ENCODE measurements at regions of chr1 and their contacts with region 1.

Region 1: DNA sequence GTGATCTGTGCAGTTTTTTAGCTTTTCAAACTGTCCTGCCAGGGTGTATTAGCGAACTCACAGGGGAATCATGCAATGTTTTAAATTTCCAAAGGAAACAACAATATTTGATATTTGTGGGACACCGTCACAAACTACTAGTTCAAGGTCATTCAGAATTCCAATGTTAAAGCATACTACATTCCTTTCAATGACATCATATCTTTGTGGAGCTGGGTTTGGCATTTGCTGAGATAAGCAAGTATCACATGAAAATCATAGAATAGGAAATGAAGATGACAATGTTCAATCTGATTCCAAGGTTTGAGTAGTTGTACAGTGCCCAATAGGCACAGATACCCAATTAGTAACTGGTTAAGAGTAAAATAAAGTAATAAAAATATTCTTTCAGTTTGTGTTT is 35.6 kb downstream of the NUF2 start:
- DNase-seq: no peak
- H3K4me3 ChIP-seq: no peak overlapping the region
- H3K27ac ChIP-seq: no peak overlapping the region
- H3K4me1 ChIP-seq: no peaks in the 10 kb centered on the region
- H3K27me3 ChIP-seq: no peaks in the 10 kb centered on the region
- CTCF ChIP-seq: no peak
- POLR2A ChIP-seq: no peak

Region 2: DNA sequence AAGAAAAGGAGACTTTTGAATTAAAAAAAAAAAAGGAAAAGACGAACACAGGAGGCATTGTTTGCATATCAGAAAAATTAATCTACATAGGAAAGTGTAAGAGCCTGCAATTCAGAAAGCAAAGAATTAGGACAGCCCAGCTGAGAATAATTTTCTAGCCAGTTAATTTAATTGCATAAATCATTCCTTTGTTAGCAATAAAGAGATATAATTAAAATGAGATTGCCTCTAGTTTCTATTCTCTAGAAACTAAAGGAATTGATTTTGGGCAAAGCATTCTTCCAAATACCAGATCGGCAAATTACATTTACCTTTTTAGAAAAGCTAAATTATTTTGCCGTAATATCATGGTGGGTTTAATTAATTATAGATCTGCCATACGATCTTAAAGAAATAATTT is 10.3 kb after region 1 on chr1:
- intact Hi-C with region 1: loop called (anchors 1 kb)
- DNase-seq: no peak
- H3K4me3 ChIP-seq: no peak overlapping the region
- H3K27ac ChIP-seq: no peak overlapping the region
- H3K4me1 ChIP-seq: no peaks in the 10 kb centered on the region
- H3K27me3 ChIP-seq: no peaks in the 10 kb centered on the region
- CTCF ChIP-seq: no peak
- POLR2A ChIP-seq: no peak

Region 3: DNA sequence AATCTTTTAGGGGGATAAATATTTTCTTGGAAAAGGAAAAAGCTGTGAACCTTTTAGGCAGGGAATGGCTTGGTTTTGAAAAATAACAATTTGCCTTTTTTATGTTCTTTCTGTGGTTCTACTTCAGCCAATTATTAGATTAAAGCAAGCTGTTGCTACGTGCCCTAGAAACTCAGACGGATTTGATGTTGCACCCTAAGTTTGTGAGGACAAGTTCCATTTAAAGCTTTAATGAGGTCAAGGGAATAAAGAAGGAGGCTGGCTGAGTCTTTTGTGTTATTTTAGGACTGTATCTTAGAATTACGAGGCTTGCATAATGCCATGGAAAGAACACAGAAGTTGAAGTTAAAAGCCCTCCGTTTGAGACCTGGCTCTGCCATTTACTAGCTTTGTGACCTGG is 181.3 kb after region 1 on chr1:
- intact Hi-C with region 1: no loop called
- DNase-seq: no peak
- H3K4me3 ChIP-seq: no peak overlapping the region
- H3K27ac ChIP-seq: no peak overlapping the region
- H3K4me1 ChIP-seq: no peaks in the 10 kb centered on the region
- H3K27me3 ChIP-seq: no peaks in the 10 kb centered on the region
- CTCF ChIP-seq: no peak
- POLR2A ChIP-seq: no peak